WTC11 (cell line): ENCODE measurements at regions of chr11 and their contacts with region 1.

Region 1: GRCh38 chr11:36492724-36493304 is 17.3 kb downstream of the TRAF6 start:
- DNase-seq: no peak
- ATAC-seq: peak; percentile 60
- H3K4me3 Mint-ChIP-seq: no peak overlapping the region
- H3K27ac Mint-ChIP-seq: no peak overlapping the region
- H3K4me1 Mint-ChIP-seq: no peaks in the 10 kb centered on the region
- H3K27me3 Mint-ChIP-seq: no peaks in the 10 kb centered on the region
- CTCF ChIP-seq: peak; percentile 57

Region 2: GRCh38 chr11:36278531-36279282 is 214.1 kb before region 1 on chr11:
- CTCF ChIA-PET with region 1: interaction called, 10 read pairs
- POLR2A ChIA-PET with region 1: no interaction called
- DNase-seq: no peak
- ATAC-seq: peak; percentile 91
- H3K4me3 Mint-ChIP-seq: no peak overlapping the region
- H3K27ac Mint-ChIP-seq: no peak overlapping the region
- H3K4me1 Mint-ChIP-seq: no peaks in the 10 kb centered on the region
- H3K27me3 Mint-ChIP-seq: no peaks in the 10 kb centered on the region; the same call in 1 of the 2 replicates
- CTCF ChIP-seq: no peak

Region 3: DNA sequence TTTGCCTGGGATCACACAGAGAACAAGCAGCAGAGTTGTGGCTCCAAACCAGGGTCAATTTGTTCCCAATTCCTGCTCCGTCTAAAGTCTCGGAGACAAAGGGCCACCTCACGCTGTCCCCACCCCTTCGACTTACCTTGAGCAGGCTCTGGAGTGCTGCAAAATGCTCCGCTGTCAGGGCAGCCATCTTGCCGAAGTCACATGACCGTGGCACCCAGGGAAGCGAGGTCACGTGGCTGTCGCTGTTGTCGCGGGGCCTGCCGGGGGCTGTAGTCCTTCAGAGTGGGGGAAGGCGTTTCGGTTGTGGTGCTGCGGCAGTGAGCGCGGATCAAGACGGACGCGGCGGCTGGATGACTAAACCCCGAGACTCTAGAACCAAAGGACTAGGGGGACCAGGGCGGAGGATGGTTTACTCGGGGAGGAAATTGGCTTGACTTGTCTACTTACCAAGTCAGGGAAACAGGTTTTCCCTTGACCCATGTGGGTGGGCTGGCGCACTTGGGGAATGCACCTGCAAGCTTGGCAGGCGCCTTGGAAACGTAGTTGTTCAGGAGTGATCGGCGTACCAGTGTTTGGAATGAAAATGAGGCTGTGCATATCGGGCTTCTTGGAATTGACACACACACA is 203.5 kb before region 1 on chr11 and contains the start of gene COMMD9:
- CTCF ChIA-PET with region 1: interaction called, 29 read pairs
- POLR2A ChIA-PET with region 1: interaction called, 4 read pairs
- DNase-seq: peak; percentile 96
- ATAC-seq: peak; percentile 94
- H3K4me3 Mint-ChIP-seq: peak within 1 kb of the TSS; percentile 92
- H3K27ac Mint-ChIP-seq: peak within 1 kb of the TSS; percentile 80
- H3K4me1 Mint-ChIP-seq: peaks cover 5% of the 10 kb centered on the region
- H3K27me3 Mint-ChIP-seq: peaks cover 24% of the 10 kb centered on the region
- CTCF ChIP-seq: no peak
- total RNA-seq, gene COMMD9: 26.1 to 33.3 TPM (median 27.1 TPM) in 3 replicates

Region 4: GRCh38 chr11:36376888-36377758 is 115.7 kb before region 1 on chr11:
- CTCF ChIA-PET with region 1: interaction called, 18 read pairs
- POLR2A ChIA-PET with region 1: no interaction called
- DNase-seq: peak; percentile 76
- ATAC-seq: peak; percentile 87
- H3K4me3 Mint-ChIP-seq: peak overlapping the region; percentile 90
- H3K27ac Mint-ChIP-seq: no peak overlapping the region
- H3K4me1 Mint-ChIP-seq: peaks cover 12% of the 10 kb centered on the region
- H3K27me3 Mint-ChIP-seq: peaks cover 81% of the 10 kb centered on the region
- CTCF ChIP-seq: peak; percentile 59

Region 5: GRCh38 chr11:36441610-36442208 is 51.1 kb before region 1 on chr11:
- CTCF ChIA-PET with region 1: no interaction called
- POLR2A ChIA-PET with region 1: no interaction called
- DNase-seq: no peak
- ATAC-seq: no peak
- H3K4me3 Mint-ChIP-seq: no peak overlapping the region
- H3K27ac Mint-ChIP-seq: no peak overlapping the region
- H3K4me1 Mint-ChIP-seq: 0 out of 2 replicates have a peak, but pooled peaks cover 3% of the 10 kb centered on the region
- H3K27me3 Mint-ChIP-seq: no peaks in the 10 kb centered on the region
- CTCF ChIP-seq: no peak

Region 6: DNA sequence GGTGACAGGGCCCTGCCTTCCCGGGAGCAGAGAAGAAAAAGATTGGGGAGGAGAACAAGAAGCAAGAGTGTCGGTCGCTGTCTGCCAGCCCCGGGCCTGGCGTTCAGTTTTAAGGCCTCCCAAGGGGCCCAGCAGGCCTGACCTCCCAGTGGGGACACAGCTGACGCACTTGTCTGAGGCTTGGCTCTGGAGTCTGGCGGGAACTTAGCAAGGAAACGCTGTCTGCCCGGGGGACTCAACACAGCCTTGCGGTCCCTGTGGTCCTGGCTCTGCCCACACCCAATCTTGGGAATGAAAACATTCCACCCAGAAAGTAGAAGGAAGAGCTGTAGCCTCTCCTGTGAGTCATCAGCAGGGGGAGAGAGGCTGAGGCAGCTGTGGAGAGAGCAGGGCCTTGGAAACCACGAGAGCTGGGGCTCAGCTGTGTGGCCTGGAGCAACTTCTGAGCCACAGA is 37.1 kb before region 1 on chr11:
- CTCF ChIA-PET with region 1: interaction called, 12 read pairs
- POLR2A ChIA-PET with region 1: no interaction called
- DNase-seq: no peak
- ATAC-seq: no peak
- H3K4me3 Mint-ChIP-seq: no peak overlapping the region
- H3K27ac Mint-ChIP-seq: no peak overlapping the region
- H3K4me1 Mint-ChIP-seq: peaks cover 27% of the 10 kb centered on the region
- H3K27me3 Mint-ChIP-seq: no peaks in the 10 kb centered on the region
- CTCF ChIP-seq: no peak

Region 7: GRCh38 chr11:36469063-36469462 is 23.8 kb before region 1 on chr11:
- CTCF ChIA-PET with region 1: interaction called, 18 read pairs
- POLR2A ChIA-PET with region 1: no interaction called
- DNase-seq: peak; percentile 92
- ATAC-seq: peak; percentile 96
- H3K4me3 Mint-ChIP-seq: no peak overlapping the region
- H3K27ac Mint-ChIP-seq: no peak overlapping the region
- H3K4me1 Mint-ChIP-seq: peaks cover 7% of the 10 kb centered on the region; the same call in 1 of the 2 replicates
- H3K27me3 Mint-ChIP-seq: peaks cover 13% of the 10 kb centered on the region
- CTCF ChIP-seq: peak; percentile 70

Region 8: GRCh38 chr11:36478700-36479329 is 14.0 kb before region 1 on chr11:
- CTCF ChIA-PET with region 1: interaction called, 49 read pairs
- POLR2A ChIA-PET with region 1: no interaction called
- DNase-seq: no peak
- ATAC-seq: peak; percentile 60
- H3K4me3 Mint-ChIP-seq: no peak overlapping the region
- H3K27ac Mint-ChIP-seq: no peak overlapping the region
- H3K4me1 Mint-ChIP-seq: no peaks in the 10 kb centered on the region
- H3K27me3 Mint-ChIP-seq: peaks cover 9% of the 10 kb centered on the region; the same call in 1 of the 2 replicates
- CTCF ChIP-seq: no peak